ENCODE measurements at regions of chr6 and their contacts with region 1.

Region 1: DNA sequence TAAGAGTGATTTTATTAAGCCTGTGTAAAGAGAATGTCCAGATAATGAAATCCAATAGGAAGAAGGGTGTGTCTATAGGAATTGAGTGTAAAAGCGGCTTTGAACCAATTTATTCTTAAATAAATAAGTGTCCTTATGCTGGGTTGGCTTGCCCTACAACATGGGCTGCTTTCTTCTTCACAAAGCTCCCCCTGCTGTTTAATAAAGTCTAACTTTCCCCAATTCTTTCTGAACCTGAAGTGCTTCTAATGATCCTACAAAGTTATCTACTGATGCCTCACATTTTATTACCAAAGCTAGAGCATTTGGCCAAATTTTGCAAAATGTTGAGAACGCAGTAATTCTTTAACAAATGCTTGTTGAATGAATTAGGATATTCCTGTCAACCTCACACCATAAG is 36.3 kb upstream of the SIRT5 start:
- DNase-seq: no peak
- ATAC-seq: peak; percentile 80

Region 2: DNA sequence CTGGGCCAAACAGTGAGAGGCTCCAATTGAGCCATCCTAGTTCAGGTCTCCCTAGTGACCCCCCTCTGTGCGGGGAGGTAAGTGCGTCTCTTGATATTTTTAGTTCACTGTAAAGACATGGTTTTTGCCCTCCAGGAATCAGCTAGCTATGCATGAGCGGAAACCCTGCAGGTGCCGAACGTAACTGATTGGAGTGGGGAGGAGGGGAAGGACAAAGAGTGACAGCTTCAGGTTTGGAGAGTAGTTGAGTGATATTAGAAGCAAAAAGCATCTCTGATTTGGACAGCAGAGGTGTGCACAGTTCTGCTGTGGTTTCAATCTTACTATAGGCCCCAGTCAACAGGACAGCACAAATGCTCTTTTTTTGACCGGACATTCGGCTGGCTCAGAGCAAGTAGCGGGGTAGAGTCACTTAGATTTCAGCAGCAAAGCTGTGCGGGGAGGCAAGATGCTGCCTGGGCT is 241.5 kb before region 1 on chr6:
- intact Hi-C with region 1: no loop called
- DNase-seq: no peak
- ATAC-seq: no peak

Region 3: DNA sequence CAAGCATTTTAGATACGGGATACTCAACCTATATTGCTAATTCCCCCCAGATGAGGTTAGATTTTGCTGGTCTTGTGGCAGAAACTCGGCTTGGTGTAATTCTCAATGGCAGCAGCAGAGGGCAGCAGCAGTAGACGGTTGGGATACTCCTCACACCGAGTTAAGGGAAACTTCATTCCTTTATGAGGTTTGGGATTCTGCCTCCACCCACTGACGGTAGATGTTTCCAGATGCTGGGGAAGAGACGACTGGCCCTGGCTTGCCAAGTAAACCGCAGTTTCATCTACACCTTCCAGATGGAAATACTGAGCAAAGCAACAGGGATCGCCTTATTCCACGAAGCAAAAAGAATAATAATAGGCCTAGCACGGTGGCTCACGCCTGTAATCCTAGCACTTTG is 201.5 kb before region 1 on chr6:
- intact Hi-C with region 1: loop called (anchors 5 kb)
- DNase-seq: peak; percentile 89
- ATAC-seq: peak; percentile 79

Region 4: DNA sequence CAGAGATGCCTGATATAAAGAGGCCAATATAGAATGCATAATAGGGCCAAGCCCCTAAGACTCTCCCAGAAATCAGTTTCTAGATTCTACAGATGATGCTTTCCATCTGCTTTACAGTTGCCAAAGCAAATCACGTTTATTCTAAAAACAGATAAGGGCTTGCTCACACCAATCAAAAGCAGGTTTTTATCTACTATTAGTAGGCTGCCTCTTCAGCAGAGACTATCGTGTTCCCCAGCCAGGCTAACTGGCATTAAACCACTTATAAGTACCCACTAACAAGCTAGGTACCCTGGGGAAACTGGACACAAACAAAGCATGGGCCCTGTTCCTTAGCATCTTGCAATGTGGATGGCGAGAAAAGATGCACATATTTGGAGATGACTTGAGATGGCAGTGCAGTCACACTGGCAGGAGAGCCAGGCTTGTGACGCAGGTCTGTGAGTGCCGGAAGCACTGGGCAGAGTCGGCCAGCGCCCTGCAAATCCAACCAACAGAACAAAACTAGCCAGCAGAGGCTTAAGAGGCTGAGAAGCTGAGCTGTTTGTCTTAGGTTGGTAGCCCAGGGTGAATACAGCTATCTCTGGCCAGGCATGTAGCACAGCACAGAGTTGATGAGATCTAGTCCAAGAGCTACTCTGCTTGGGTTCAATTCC is 124.1 kb before region 1 on chr6:
- intact Hi-C with region 1: loop called (anchors 10 kb)
- DNase-seq: peak; percentile 77
- ATAC-seq: peak; percentile 76

Region 5: GRCh38 chr6:13487122-13488014 is 50.7 kb before region 1 on chr6 and contains the start of gene GFOD1:
- intact Hi-C with region 1: loop called (anchors 5 kb)
- DNase-seq: peak; percentile 95
- ATAC-seq: peak; percentile 90
- total RNA-seq, gene GFOD1: 46.2 TPM

Region 6: DNA sequence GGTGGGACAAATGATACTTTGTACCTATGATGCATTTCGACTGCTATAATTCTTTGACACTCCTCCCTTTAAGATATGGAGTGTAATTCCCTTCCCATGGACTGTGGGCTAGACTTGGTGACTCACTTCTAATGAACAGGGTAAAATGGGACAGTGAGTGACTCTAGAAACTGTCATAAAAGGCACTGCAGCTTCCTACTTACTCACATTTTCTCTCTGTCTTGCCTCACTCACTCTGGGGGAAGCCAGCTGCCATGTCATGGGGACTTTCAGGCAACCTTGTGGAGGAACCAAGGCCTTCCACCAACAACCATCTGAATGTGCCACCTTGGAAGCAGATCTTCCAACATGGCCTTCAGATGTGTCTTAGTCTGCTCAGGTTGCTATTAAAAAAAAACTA is 37.8 kb before region 1 on chr6:
- intact Hi-C with region 1: no loop called
- DNase-seq: no peak
- ATAC-seq: no peak

Region 7: DNA sequence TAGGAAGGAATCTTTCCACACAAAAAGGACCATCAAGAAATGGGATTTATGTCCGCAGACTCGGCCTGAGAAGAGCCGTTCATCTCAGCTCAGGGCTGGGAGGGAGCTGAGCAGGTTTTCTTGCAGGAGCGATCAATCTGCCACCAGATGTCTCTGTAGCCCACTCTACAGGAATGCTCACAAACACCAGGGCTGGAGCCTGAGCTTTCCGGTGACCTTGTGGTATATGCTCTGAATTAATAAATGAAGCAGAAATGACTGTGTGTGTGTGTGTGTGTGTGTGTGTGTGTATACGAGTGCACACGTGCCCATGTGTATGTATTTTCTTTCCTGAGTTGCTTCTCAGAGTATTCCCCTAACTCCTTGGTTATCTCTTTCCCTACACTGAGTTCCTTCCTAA is 591.5 kb after region 1 on chr6:
- intact Hi-C with region 1: no loop called
- DNase-seq: peak; percentile 45
- ATAC-seq: peak; percentile 93